ENCODE measurements at regions of chr14 and their contacts with region 1.

Region 1: DNA sequence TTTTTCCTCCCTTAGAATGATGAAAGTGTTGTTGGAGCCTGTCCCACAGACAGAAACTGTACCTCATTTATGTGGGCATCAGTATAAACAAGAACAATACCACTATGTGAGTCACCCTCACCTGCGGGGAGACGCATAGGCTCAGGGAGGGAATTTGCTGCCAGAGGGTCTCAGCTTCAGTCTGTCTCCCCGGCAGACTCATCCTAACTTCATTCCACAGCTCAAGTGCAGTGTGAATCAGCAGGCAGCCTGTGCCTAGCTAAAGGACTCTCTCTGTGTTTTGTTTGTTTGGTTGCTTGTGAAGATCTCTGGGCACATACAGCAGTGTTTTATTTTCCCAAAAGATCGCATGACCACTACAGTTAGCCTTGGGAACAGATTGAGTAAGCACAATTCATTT is 98.9 kb downstream of the PRKCH start:
- DNase-seq: no peak
- ATAC-seq: peak in 1 of 3 donors; percentile 25
- H3K4me3 ChIP-seq: no peak overlapping the region
- H3K4me3 Mint-ChIP-seq: peak overlapping the region; percentile 53
- H3K27ac ChIP-seq: peak overlapping the region; percentile 32
- H3K27ac Mint-ChIP-seq: no peak overlapping the region
- H3K4me1 ChIP-seq: peaks cover 69% of the 10 kb centered on the region
- H3K4me1 Mint-ChIP-seq: no peaks in the 10 kb centered on the region
- H3K27me3 ChIP-seq: no peaks in the 10 kb centered on the region
- H3K27me3 Mint-ChIP-seq: no peaks in the 10 kb centered on the region
- CTCF ChIP-seq: no peak

Region 2: DNA sequence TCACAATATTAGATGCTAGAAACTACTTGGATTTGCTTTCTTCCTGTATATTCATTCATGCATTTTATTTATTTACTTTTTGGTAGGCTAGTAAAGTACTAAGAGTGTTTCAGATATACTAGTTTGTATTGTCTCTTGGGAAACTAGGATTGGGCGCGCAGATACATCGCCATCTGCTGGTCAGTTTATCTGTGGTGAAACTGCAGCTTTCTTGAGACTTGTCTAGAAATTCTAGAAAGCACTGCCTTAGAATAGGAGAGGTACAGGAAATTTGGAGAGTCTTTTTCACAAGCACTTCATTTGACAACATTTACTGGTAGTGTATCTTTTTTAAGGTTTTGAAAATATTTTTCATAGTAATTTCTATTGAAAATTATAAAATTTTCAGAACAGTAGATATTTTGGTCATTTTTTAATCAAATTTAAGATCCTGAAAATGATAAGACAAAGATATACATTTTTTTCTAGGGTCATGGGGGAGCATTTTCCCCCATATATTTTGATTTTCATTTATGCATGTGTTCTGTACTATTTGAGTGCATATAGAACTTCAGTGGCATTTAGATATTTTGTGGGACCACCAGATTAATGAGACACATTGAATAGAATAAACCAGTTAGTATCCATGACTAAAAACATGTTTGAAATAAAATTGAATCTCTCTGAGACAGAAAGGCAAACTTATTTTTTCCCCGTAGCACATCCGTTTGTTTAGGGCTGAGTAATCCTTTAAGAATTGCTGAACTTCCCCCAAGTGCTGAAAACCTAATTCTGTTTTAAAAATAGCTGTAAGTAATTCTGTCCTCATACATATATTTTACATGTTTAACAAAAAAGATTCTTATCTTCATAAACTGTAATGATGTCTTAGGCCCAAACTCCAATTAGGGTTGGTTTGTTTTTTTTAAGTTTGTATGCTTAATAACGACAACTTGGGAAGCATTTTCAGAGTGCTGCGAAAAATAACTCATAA is 394.8 kb before region 1 on chr14:
- intact Hi-C with region 1: no loop called
- DNase-seq: peak; percentile 19 to 77
- ATAC-seq: peak; percentile 46 to 59 (median 53)
- H3K4me3 ChIP-seq: no peak overlapping the region
- H3K4me3 Mint-ChIP-seq: no peak overlapping the region
- H3K27ac ChIP-seq: no peak overlapping the region
- H3K27ac Mint-ChIP-seq: no peak overlapping the region
- H3K4me1 ChIP-seq: no peaks in the 10 kb centered on the region
- H3K4me1 Mint-ChIP-seq: no peaks in the 10 kb centered on the region
- H3K27me3 ChIP-seq: no peaks in the 10 kb centered on the region
- H3K27me3 Mint-ChIP-seq: no peaks in the 10 kb centered on the region
- CTCF ChIP-seq: peak; percentile 97

Region 3: GRCh38 chr14:61403411-61403810 is 16.9 kb before region 1 on chr14:
- intact Hi-C with region 1: loop called (anchors 1 kb)
- DNase-seq: peak in 1 of 2 donors; percentile 76
- ATAC-seq: peak; percentile 68 to 83 (median 83)
- H3K4me3 ChIP-seq: no peak overlapping the region
- H3K4me3 Mint-ChIP-seq: peak overlapping the region; percentile 71
- H3K27ac ChIP-seq: peak overlapping the region; percentile 75
- H3K27ac Mint-ChIP-seq: no peak overlapping the region
- H3K4me1 ChIP-seq: peaks cover 58% of the 10 kb centered on the region
- H3K4me1 Mint-ChIP-seq: peaks cover 88 to 91% of the 10 kb centered on the region in 2 donors
- H3K27me3 ChIP-seq: no peaks in the 10 kb centered on the region
- H3K27me3 Mint-ChIP-seq: no peaks in the 10 kb centered on the region
- CTCF ChIP-seq: no peak

Region 4: DNA sequence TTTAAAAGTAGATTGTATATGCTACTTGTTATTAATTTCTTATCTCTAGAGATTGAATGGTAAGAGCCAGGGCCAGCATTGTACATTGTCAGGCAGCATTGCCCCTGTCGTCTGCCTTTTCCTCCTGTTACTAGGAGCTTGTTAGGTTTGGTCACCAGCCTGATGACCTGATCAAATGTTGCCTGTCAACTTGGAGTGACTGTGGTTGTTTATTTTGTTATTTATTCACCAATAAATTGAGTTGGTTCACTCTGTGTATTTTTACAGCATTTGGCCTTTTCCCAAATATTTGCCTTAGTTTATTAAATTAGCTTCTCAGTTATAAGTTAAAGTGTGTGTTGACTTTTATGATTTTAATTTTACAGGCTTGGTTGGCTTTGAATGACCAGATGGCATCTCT is 10.6 kb before region 1 on chr14:
- intact Hi-C with region 1: loop called (anchors 1 kb)
- DNase-seq: no peak
- ATAC-seq: peak in 1 of 3 donors; percentile 18
- H3K4me3 ChIP-seq: no peak overlapping the region
- H3K4me3 Mint-ChIP-seq: peak overlapping the region; percentile 25
- H3K27ac ChIP-seq: no peak overlapping the region
- H3K27ac Mint-ChIP-seq: no peak overlapping the region
- H3K4me1 ChIP-seq: peaks cover 86% of the 10 kb centered on the region
- H3K4me1 Mint-ChIP-seq: peaks cover 47 to 48% of the 10 kb centered on the region in 2 donors
- H3K27me3 ChIP-seq: no peaks in the 10 kb centered on the region
- H3K27me3 Mint-ChIP-seq: no peaks in the 10 kb centered on the region
- CTCF ChIP-seq: no peak

Region 5: DNA sequence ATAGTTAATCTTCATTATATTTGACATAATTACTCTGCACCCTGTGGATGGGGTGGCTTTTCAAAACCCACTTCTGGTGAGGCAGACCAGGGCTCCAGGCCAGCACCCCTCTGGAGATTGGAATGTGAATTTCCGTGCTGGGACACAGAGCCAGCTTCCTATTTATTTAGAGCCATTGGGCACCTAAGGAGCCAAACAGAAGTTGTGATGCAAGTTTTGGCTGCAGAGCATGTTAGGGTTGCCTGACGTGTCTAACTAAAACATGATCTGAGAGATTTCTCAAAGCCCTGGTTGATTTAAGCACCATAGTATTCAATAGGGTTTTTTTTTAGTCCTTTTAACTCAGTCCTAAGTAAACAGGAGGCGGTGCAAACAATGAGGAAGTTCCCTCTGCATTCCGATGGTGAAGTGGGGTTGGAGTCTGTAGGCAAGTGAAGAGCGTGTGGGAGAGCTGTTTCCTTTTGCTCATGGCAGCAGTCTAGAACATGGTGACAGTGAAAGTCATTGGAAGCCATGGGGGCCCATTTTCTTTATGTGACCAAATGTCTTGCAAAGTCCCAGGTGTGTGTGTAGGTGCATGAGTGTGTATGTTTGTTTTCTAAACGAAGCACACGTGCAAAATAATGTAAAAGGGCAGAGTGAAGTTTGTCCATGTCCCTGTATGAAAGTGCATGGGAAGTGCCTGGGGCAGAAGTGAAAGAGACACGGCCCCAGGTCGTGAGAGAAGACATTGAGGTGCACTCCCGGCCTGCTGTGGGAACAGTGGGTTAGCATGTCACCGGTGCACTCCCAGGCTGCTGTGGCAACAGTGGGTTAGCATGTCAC is 18.7 kb after region 1 on chr14:
- intact Hi-C with region 1: loop called (anchors 2 kb)
- DNase-seq: peak in 1 of 2 donors; percentile 78
- ATAC-seq: peak; percentile 25 to 49 (median 40)
- H3K4me3 ChIP-seq: no peak overlapping the region
- H3K4me3 Mint-ChIP-seq: peak overlapping the region; percentile 92
- H3K27ac ChIP-seq: peak overlapping the region; percentile 74
- H3K27ac Mint-ChIP-seq: no peak overlapping the region
- H3K4me1 ChIP-seq: peaks cover 78% of the 10 kb centered on the region
- H3K4me1 Mint-ChIP-seq: peaks cover 92 to 96% of the 10 kb centered on the region in 2 donors
- H3K27me3 ChIP-seq: no peaks in the 10 kb centered on the region
- H3K27me3 Mint-ChIP-seq: no peaks in the 10 kb centered on the region
- CTCF ChIP-seq: no peak

Region 6: DNA sequence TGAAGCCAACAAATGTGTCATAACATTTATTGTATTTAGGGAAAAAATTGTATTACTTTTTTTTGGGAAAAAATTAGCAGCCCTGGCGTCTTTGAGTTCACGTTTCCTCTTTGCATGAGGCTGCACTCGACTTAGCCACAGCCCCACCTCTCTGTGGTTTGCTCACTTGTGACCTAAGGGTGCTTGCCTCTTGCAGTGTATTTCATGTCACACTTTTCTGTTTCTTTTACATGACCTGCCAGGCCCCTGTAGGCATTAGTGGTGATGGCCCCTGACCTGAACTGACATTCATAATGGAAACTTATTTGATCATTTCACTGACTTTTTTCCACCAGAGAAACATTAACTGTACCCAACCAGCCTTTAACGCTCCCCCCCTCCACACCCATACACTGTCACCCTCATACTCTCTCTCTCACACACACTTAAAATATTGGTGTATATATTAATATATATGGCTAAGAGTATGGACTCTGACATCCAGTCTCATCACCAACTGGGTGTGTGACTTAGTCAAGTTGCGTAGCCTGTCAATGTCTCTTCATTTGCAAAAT is 24.0 kb after region 1 on chr14:
- intact Hi-C with region 1: loop called (anchors 2 kb)
- DNase-seq: peak; percentile 64 to 85
- ATAC-seq: peak; percentile 87 to 92 (median 87)
- H3K4me3 ChIP-seq: no peak overlapping the region
- H3K4me3 Mint-ChIP-seq: peak overlapping the region; percentile 82
- H3K27ac ChIP-seq: peak overlapping the region; percentile 70
- H3K27ac Mint-ChIP-seq: no peak overlapping the region
- H3K4me1 ChIP-seq: peaks cover 65% of the 10 kb centered on the region
- H3K4me1 Mint-ChIP-seq: peaks cover 94 to 96% of the 10 kb centered on the region in 2 donors
- H3K27me3 ChIP-seq: no peaks in the 10 kb centered on the region
- H3K27me3 Mint-ChIP-seq: no peaks in the 10 kb centered on the region
- CTCF ChIP-seq: no peak